Posterior cingulate gyrus (tissue), 11 donors: ENCODE measurements at regions of chr5 and their contacts with region 1.

Region 1: GRCh38 chr5:147782110-147783028 is at the start of gene JAKMIP2:
- DNase-seq: peak; percentile 96 to 100 (median 98)

Region 2: GRCh38 chr5:146947181-146947941 is 835.0 kb before region 1 on chr5:
- intact Hi-C with region 1: no loop called
- DNase-seq: no peak

Region 3: DNA sequence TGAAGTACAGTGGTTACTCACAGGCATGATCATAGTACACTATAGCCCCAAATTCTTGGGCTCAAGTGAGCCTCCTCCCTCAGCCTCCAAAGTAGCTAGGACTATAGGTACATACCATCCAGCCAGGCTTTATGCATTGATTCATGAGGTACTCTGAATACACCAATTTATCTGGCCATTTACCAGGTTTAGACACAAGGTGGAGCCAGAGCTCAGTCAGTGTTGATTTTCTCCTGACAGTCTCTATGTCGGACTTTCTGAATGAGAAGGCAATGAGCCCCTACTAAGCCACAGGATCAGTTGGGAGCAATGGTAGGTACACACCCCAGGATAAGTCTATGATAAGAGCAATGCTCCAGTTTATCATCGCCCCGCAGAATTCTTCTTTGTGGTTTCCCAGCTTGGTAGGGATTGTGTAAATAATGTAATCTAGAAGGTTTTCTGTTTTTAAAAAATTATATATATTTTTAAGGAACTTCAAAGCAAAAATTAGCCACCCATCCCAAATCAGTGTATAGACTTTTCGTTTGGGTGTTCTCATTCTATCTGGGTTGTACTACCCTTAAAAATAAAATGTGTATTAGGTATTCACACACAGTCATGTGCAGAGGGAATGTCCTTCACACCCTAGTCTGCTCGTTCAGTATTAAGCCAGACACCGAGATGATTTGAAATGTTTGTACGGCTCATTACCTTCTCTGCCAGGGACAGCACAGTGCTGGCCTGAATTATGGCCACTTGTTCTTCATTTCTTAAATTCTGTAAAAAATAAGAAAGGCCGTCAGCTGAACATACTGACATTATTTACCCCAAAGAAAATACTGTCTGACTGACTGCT is 154.1 kb before region 1 on chr5:
- intact Hi-C with region 1: loop called (anchors 2 kb)
- DNase-seq: peak in 5 of 10 donors; percentile 17 to 73 (median 72)

Region 4: GRCh38 chr5:147734894-147735293 is 47.5 kb before region 1 on chr5:
- intact Hi-C with region 1: loop called (anchors 5 kb)
- DNase-seq: no peak